ENCODE measurements at regions of chr6 and their contacts with region 1.

Region 1: GRCh38 chr6:137313928-137314855 is 95.0 kb upstream of the IFNGR1 start:
- DNase-seq: peak; percentile 54 to 80 (median 72)
- H3K4me3 ChIP-seq: no peak overlapping the region
- H3K4me3 Mint-ChIP-seq: no peak overlapping the region
- H3K27ac ChIP-seq: no peak overlapping the region
- H3K27ac Mint-ChIP-seq: peak overlapping the region in 1 of 7 donors; percentile 68
- H3K4me1 ChIP-seq: peaks cover 28 to 32% of the 10 kb centered on the region in 2 donors
- H3K4me1 Mint-ChIP-seq: peaks cover 29% of the 10 kb centered on the region
- H3K27me3 ChIP-seq: no peaks in the 10 kb centered on the region
- H3K27me3 Mint-ChIP-seq: peaks cover 0 to 4% (median 3%) of the 10 kb centered on the region in 3 donors
- CTCF ChIP-seq: peak; percentile 83

Region 2: GRCh38 chr6:137094411-137095008 is 219.7 kb before region 1 on chr6:
- intact Hi-C with region 1: loop called in 1 of 2 experiments (anchors 5 kb)
- DNase-seq: peak; percentile 45 to 68 (median 62)
- H3K4me3 ChIP-seq: no peak overlapping the region
- H3K4me3 Mint-ChIP-seq: no peak overlapping the region
- H3K27ac ChIP-seq: no peak overlapping the region
- H3K27ac Mint-ChIP-seq: no peak overlapping the region
- H3K4me1 ChIP-seq: peaks cover 3 to 9% of the 10 kb centered on the region in 2 donors
- H3K4me1 Mint-ChIP-seq: peaks cover 14% of the 10 kb centered on the region
- H3K27me3 ChIP-seq: no peaks in the 10 kb centered on the region
- H3K27me3 Mint-ChIP-seq: peaks cover 0 to 5% (median 2%) of the 10 kb centered on the region in 3 donors
- CTCF ChIP-seq: peak; percentile 84

Region 3: DNA sequence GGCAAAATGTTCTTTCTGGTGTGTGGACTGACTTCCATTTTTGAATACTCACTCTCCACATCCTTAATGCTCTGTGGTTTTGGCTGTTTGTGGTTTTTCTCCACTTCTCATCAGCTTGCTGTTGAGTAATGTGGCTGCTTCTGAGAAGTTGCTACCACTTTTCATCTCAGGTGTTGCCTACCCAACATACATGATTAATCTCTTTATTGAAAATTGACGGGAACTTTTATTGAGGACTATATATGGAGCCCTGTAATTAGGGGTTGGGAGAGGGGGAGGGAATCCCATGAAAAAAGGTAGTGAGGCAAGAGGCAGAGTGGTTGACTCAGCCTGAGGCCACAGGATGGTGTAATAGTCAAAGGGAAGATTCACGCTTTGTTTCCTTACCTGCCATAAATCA is 158.4 kb before region 1 on chr6:
- intact Hi-C with region 1: loop called in 1 of 2 experiments (anchors 10 kb)
- DNase-seq: peak; percentile 70 to 83 (median 81)
- H3K4me3 ChIP-seq: peak overlapping the region in 1 of 3 experiments; percentile 44
- H3K4me3 Mint-ChIP-seq: peak overlapping the region in 1 of 2 donors; percentile 73
- H3K27ac ChIP-seq: peak overlapping the region in 1 of 2 donors; percentile 72
- H3K27ac Mint-ChIP-seq: peak overlapping the region; percentile 86 to 94 (median 91)
- H3K4me1 ChIP-seq: peaks cover 28 to 49% of the 10 kb centered on the region in 2 donors
- H3K4me1 Mint-ChIP-seq: peaks cover 46% of the 10 kb centered on the region
- H3K27me3 ChIP-seq: no peaks in the 10 kb centered on the region
- H3K27me3 Mint-ChIP-seq: peaks cover 2 to 4% (median 4%) of the 10 kb centered on the region in 3 donors
- CTCF ChIP-seq: no peak

Region 4: DNA sequence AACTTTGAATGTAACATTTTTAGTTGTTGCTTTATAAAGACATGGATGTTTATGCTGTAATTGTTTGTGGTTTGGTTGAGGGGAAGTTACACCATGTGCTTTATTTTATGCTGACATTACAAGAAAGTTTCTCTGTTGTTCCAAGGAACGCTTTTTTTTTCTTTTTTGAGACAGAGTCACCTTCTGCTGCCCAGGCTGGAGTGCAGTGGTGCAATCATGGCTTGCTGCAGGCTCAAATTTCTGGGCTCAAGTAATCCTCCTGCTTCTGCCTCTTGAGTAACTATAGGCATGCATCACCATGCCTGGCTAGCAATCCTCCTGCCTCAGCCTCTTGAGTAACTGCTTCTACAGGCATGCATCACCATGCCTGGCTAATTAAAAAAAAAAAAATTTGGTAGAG is 74.0 kb before region 1 on chr6:
- intact Hi-C with region 1: loop called in 1 of 2 experiments (anchors 5 kb)
- DNase-seq: peak; percentile 95 to 99 (median 96)
- H3K4me3 ChIP-seq: peak overlapping the region in 1 of 3 experiments; percentile 50
- H3K4me3 Mint-ChIP-seq: no peak overlapping the region
- H3K27ac ChIP-seq: peak overlapping the region; percentile 78 to 84
- H3K27ac Mint-ChIP-seq: peak overlapping the region; percentile 86 to 97 (median 94)
- H3K4me1 ChIP-seq: peaks cover 57 to 69% of the 10 kb centered on the region in 2 donors
- H3K4me1 Mint-ChIP-seq: peaks cover 55% of the 10 kb centered on the region
- H3K27me3 ChIP-seq: no peaks in the 10 kb centered on the region
- H3K27me3 Mint-ChIP-seq: peaks cover 0 to 2% (median 0%) of the 10 kb centered on the region in 3 donors
- CTCF ChIP-seq: no peak

Region 5: GRCh38 chr6:137271245-137272183 is 42.7 kb before region 1 on chr6:
- intact Hi-C with region 1: loop called in 1 of 2 experiments (anchors 2 kb)
- DNase-seq: peak in 2 of 3 donors; percentile 58 to 67
- H3K4me3 ChIP-seq: peak overlapping the region in 1 of 3 experiments; percentile 32
- H3K4me3 Mint-ChIP-seq: peak overlapping the region in 1 of 2 donors; percentile 35
- H3K27ac ChIP-seq: peak overlapping the region in 1 of 2 donors; percentile 68
- H3K27ac Mint-ChIP-seq: peak overlapping the region; percentile 50 to 87 (median 78)
- H3K4me1 ChIP-seq: peaks cover 15 to 24% of the 10 kb centered on the region in 2 donors
- H3K4me1 Mint-ChIP-seq: peaks cover 17% of the 10 kb centered on the region
- H3K27me3 ChIP-seq: no peaks in the 10 kb centered on the region
- H3K27me3 Mint-ChIP-seq: peaks cover 0 to 2% (median 0%) of the 10 kb centered on the region in 3 donors
- CTCF ChIP-seq: peak; percentile 91

Region 6: GRCh38 chr6:137378090-137378369 is 63.8 kb after region 1 on chr6:
- intact Hi-C with region 1: no loop called
- DNase-seq: no peak
- H3K4me3 ChIP-seq: no peak overlapping the region
- H3K4me3 Mint-ChIP-seq: no peak overlapping the region
- H3K27ac ChIP-seq: no peak overlapping the region
- H3K27ac Mint-ChIP-seq: no peak overlapping the region
- H3K4me1 ChIP-seq: no peaks in the 10 kb centered on the region
- H3K4me1 Mint-ChIP-seq: no peaks in the 10 kb centered on the region
- H3K27me3 ChIP-seq: no peaks in the 10 kb centered on the region
- H3K27me3 Mint-ChIP-seq: peaks cover 0 to 1% (median under 1%) of the 10 kb centered on the region in 3 donors
- CTCF ChIP-seq: no peak